Cardiac septum (tissue), 1 donor: ENCODE measurements at regions of chrX and their contacts with region 1.

Region 1: DNA sequence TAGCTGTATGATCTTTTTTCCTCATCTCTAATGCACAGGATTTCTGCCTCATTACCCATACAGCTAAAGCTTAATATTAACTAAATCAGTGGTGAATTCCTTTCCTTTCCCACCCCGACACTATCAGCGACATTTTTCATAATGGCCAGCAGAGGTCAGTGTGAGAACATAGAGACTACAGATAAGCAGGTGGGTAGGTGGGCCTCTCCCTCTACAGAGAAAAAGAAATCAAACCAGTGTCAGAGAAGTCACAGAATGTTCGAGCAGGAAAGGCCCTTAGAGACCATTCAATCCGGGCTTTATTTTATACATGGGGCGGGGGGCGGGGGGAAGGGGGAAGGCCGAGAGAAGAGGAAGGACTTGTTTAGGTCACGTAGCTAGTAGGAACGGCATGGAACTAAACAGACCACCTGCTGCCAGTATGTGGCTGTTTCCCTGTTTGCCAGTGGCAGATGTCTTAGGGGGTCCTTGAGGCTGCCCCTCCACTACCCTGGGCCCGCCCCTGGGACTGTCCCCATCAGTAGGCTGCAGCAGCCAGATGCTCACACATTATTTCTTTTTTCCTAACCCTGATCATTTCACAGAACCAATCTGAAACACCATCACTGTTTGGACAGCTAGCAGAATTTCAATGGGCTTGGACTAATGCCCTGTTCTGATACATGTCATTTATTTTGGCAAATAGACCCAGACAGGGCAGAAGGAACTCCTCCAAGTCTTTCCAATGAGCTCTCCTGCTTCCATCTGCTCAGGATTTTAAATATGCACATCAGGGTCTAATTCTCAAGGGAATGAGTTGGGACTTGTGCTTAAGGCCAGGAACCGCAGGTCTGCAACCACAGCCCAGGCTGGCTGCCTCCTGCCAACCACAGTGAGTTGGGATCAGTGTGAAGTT is 133.4 kb downstream of the ATG4A start:
- DNase-seq: no peak

Region 2: GRCh38 chrX:108537005-108537404 is 312.0 kb after region 1 on chrX:
- intact Hi-C with region 1: loop called (anchors 5 kb)
- DNase-seq: no peak